Activated CD4-positive, alpha-beta T cell treated with anti-CD3 and anti-CD28 coated beads, Interleukin-2, amount 10 ng/mL, durations not matched to agents 7 days and 5 days (primary cell): ENCODE measurements at regions of chr14 and their contacts with region 1.

Region 1: DNA sequence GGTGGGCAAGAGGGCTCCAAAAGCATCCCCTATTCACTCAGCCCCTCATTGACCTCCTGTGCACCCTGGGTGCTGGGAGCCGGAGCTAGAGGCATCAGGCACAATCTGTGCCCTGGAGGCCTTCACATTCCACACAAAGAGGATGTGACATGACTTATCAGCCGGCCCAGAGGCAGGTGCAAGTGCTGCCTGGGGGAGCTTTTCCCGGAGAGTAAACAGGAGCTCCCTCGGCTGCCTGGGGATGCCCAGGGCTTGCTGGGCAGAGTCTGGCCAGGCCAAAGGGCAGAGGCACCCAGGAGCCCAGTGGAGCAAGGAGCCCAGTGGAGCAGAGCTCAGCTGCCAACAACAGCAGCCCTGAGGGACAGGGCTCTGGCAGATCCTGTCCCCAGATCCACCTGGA is 64.5 kb downstream of the BCL11B start:
- DNase-seq: no peak
- H3K4me3 Mint-ChIP-seq: peak overlapping the region; percentile 30
- H3K27ac Mint-ChIP-seq: peak overlapping the region; percentile 79
- H3K4me1 Mint-ChIP-seq: peaks cover 100% of the 10 kb centered on the region
- H3K27me3 Mint-ChIP-seq: no peaks in the 10 kb centered on the region

Region 2: GRCh38 chr14:99195602-99196309 is 11.7 kb before region 1 on chr14:
- CTCF ChIA-PET with region 1: interaction called, 14 read pairs
- POLR2A ChIA-PET with region 1: no interaction called
- DNase-seq: no peak
- H3K4me3 Mint-ChIP-seq: peak overlapping the region; percentile 33
- H3K27ac Mint-ChIP-seq: peak overlapping the region; percentile 95
- H3K4me1 Mint-ChIP-seq: peaks cover 98% of the 10 kb centered on the region
- H3K27me3 Mint-ChIP-seq: no peaks in the 10 kb centered on the region

Region 3: DNA sequence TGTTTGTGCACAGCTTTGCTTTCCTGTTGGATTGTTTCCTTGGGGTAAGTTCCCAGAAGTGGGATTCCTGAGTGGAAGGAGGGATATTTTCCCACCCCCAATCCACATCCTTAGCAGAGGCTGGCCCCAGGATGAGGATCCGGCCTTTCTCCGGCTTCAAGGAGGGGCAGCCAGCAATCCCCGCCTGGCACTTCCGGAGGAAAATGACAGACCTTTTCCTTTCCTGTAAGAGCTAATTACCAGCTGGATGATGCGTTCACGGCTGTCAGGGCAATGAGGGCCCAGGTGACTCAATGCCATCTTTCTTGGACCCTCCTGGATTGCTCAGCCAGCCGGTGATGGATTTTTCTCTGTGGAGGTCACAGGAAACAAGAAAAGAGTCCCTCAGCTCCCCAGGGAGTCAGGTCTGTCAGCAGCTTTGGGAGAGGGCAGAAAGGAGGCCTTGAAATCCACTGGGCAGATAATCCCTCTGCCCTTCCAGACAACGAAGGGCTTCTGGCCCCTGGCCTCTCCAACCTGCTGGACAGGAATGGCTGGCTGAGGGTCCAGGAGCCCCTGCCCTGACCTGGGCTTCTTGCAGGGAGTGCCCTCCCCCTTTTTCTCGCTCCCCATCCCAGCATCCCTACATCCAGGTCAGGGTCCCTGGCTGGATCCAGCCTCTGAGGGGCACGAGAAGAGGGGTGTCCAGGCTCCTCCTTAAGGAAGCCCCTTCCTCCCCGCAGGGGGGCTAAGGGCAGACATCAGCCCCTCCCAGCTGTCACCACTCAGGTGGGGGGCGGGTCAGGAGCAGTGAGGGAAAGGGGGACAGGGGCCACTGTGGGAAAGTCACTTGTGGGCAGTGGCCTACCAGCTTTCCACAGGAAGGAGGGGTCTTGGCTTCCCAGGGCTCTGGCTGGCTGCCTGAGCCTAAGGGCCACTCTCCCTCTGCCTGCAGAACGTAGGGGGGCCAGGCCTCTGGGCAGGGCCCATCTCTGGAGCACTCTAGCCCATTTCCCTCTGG is 412.6 kb after region 1 on chr14:
- CTCF ChIA-PET with region 1: no interaction called
- POLR2A ChIA-PET with region 1: no interaction called
- DNase-seq: no peak
- H3K4me3 Mint-ChIP-seq: no peak overlapping the region
- H3K27ac Mint-ChIP-seq: no peak overlapping the region
- H3K4me1 Mint-ChIP-seq: no peaks in the 10 kb centered on the region
- H3K27me3 Mint-ChIP-seq: peaks cover 15% of the 10 kb centered on the region